Natural killer cell (primary cell): ENCODE measurements at regions of chr1 and their contacts with region 1.

Region 1: DNA sequence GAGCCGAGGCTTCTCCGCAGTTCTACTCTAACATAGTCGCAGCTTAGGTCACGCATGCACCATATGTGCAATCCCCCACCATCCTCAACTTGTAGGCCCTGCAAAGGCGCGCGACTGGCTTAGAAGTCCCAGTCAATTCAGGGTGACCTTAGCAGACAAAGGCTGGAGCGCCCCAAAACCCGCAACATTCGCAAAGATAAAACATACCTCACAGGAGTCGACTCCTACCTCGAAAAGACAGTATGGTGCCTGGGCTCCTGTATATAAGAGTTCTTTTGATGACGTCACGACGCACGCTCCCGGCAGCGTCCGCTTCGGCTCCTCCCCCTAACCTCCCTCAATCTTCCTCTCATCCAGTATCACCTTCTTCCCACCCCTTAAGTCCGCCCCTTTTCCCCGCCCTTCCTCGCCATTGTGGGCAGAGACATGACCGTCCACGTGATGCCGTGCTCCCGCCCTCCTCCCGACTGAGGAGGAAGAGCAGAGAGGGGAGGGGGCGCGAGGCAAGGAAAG is at the start of gene GAS5:
- DNase-seq: peak; percentile 89 to 100
- ATAC-seq: peak; percentile 80 to 93 (median 84)
- H3K4me3 ChIP-seq: peak within 1 kb of the TSS; percentile 86
- H3K4me3 Mint-ChIP-seq: peak within 1 kb of the TSS; percentile 98
- H3K27ac ChIP-seq: peak within 1 kb of the TSS; percentile 77
- H3K27ac Mint-ChIP-seq: peak within 1 kb of the TSS; percentile 91 to 97
- H3K4me1 ChIP-seq: peaks cover 32% of the 10 kb centered on the region
- H3K4me1 Mint-ChIP-seq: peaks cover 78 to 79% of the 10 kb centered on the region in 2 donors
- H3K27me3 ChIP-seq: no peaks in the 10 kb centered on the region
- H3K27me3 Mint-ChIP-seq: no peaks in the 10 kb centered on the region
- CTCF ChIP-seq: no peak
- total RNA-seq, gene GAS5: 208 to 299 (median 214) TPM

Region 2: GRCh38 chr1:173824331-173825081 is 43.3 kb before region 1 on chr1 and contains the starts of genes CENPL and DARS2:
- intact Hi-C with region 1: loop called (anchors 1 kb)
- DNase-seq: peak; percentile 81 to 96
- ATAC-seq: peak; percentile 84 to 93 (median 88)
- H3K4me3 ChIP-seq: peak within 1 kb of the TSS; percentile 94
- H3K4me3 Mint-ChIP-seq: peak within 1 kb of the TSS; percentile 99
- H3K27ac ChIP-seq: peak within 1 kb of the TSS; percentile 85
- H3K27ac Mint-ChIP-seq: peak within 1 kb of the TSS; percentile 95 to 98
- H3K4me1 ChIP-seq: peaks cover 17% of the 10 kb centered on the region
- H3K4me1 Mint-ChIP-seq: peaks cover 27 to 38% of the 10 kb centered on the region in 2 donors
- H3K27me3 ChIP-seq: no peaks in the 10 kb centered on the region
- H3K27me3 Mint-ChIP-seq: no peaks in the 10 kb centered on the region
- CTCF ChIP-seq: no peak
- total RNA-seq, gene CENPL: 8.8 to 16.4 (median 10.0) TPM
- total RNA-seq, gene DARS2: 5.0 to 8.4 (median 5.8) TPM

Region 3: DNA sequence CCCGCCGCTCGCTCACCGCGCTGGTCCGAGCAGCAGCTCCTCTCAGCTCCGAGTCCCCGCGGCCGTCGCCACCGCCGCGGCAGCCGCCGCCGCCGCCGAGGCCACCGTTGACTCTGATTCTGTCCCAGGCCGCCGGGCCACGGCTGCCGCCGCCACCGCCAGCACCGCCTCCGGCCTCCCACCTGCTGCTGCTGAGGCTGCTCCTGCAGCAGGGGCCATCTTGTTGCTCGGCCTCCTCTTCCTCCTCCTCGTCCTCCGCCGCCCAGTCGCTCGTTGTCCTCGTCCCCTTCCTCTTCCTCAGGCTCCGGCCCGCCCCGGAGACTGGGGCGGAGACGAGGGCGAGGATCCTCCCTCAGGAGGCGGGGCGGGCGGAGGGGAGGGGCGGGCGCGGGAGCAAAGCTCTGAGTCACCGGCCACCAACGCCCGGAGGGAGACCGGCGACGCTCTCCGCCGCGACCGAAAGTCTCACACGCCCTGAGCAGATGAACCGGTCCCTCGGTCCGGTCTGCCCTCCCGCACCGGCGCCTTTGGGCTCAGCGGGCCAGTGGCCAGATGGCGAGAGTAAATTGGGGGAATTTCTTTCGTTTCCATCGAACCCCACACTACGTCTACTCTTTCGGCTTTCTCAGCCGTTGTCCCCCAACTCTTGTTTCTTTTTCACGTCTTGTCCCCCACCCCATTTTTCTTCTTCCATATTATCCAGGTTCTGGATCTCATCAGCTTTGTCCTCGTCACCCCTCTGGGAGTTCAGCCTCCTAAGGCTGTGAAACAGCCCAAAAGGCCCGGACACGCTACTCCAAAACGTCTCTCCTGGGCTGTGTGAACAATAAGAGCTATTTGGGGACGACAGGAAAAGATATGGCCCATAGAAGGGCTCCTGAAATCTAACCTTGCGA is 154.5 kb after region 1 on chr1 and contains the start of gene RC3H1:
- intact Hi-C with region 1: loop called (anchors 5 kb)
- DNase-seq: peak; percentile 87 to 93
- ATAC-seq: peak; percentile 91 to 97 (median 91)
- H3K4me3 ChIP-seq: peak within 1 kb of the TSS; percentile 71
- H3K4me3 Mint-ChIP-seq: peak within 1 kb of the TSS; percentile 99
- H3K27ac ChIP-seq: peak within 1 kb of the TSS; percentile 90
- H3K27ac Mint-ChIP-seq: peak within 1 kb of the TSS; percentile 93 to 98
- H3K4me1 ChIP-seq: peaks cover 14% of the 10 kb centered on the region
- H3K4me1 Mint-ChIP-seq: peaks cover 43 to 55% of the 10 kb centered on the region in 2 donors
- H3K27me3 ChIP-seq: no peaks in the 10 kb centered on the region
- H3K27me3 Mint-ChIP-seq: no peaks in the 10 kb centered on the region
- CTCF ChIP-seq: no peak
- total RNA-seq, gene RC3H1: 67.8 to 82.1 (median 78.9) TPM

Region 4: DNA sequence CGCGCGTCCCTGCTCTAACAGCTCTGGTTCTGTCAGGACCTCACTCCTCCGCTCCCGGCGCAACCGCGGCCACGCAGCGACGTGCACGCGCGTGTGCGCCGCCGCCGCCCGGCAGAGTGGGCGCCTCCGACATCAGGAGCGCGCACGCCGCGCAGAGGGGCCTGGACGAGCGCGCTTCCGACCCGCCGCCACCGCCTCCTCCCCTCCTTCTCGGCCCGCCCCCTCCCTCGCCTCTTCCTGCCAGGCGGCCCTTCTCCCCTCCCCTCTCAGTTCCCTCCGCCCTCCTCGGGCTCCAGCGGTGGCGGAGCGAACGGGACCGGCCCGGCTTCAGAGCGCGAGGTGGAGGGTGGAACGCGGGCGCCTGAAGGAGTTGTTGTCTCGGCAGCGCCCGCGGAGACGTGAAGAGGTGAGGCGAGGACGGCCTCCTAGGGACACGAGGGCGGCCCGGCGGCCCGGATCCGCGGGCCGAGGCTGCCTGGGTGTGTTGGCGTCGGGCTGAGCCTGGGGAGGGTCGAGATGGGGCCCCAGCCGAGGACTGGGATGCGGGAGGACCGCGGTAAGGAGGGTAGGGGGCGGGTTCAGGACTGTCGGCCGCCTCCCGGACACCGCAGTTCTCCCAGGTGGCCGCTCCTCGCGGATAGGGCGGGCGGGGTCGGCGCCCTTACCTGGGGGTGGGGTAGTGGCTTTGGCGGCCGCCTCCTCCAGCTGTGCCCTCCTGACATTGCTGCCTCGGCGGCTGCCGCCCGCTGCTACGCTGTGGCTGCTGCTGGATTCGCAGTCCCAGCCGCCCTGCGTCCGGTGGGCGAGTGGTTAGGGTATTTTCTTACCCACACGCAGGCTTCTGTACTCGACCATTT is 291.7 kb after region 1 on chr1 and contains the start of gene RABGAP1L:
- intact Hi-C with region 1: loop called (anchors 10 kb)
- DNase-seq: peak; percentile 87 to 98
- ATAC-seq: peak; percentile 88 to 96 (median 88)
- H3K4me3 ChIP-seq: peak within 1 kb of the TSS; percentile 81
- H3K4me3 Mint-ChIP-seq: peak within 1 kb of the TSS; percentile 92
- H3K27ac ChIP-seq: peak within 1 kb of the TSS; percentile 93
- H3K27ac Mint-ChIP-seq: peak within 1 kb of the TSS; percentile 86 to 98
- H3K4me1 ChIP-seq: peaks cover 22% of the 10 kb centered on the region
- H3K4me1 Mint-ChIP-seq: peaks cover 34 to 60% of the 10 kb centered on the region in 2 donors
- H3K27me3 ChIP-seq: no peaks in the 10 kb centered on the region
- H3K27me3 Mint-ChIP-seq: no peaks in the 10 kb centered on the region
- CTCF ChIP-seq: no peak
- total RNA-seq, gene RABGAP1L: 145 to 168 (median 153) TPM

Region 5: GRCh38 chr1:174217787-174218574 is 350.2 kb after region 1 on chr1:
- intact Hi-C with region 1: loop called (anchors 2 kb)
- DNase-seq: peak in 1 of 2 donors; percentile 70
- ATAC-seq: peak; percentile 70 to 82 (median 73)
- H3K4me3 ChIP-seq: no peak overlapping the region
- H3K4me3 Mint-ChIP-seq: no peak overlapping the region
- H3K27ac ChIP-seq: no peak overlapping the region
- H3K27ac Mint-ChIP-seq: no peak overlapping the region
- H3K4me1 ChIP-seq: no peaks in the 10 kb centered on the region
- H3K4me1 Mint-ChIP-seq: peaks cover 3 to 11% of the 10 kb centered on the region in 2 donors
- H3K27me3 ChIP-seq: no peaks in the 10 kb centered on the region
- H3K27me3 Mint-ChIP-seq: no peaks in the 10 kb centered on the region
- CTCF ChIP-seq: peak; percentile 82